Ovary (tissue), 10 donors: ENCODE measurements at regions of chr7 and their contacts with region 1.

Region 1: GRCh38 chr7:106041140-106041717 is 70.9 kb downstream of the SYPL1 start:
- DNase-seq: peak in 3 of 5 donors; percentile 22 to 45 (median 43)
- H3K4me3 ChIP-seq: no peak overlapping the region
- H3K27ac ChIP-seq: no peak overlapping the region
- H3K4me1 ChIP-seq: peaks cover 18% of the 10 kb centered on the region
- H3K27me3 ChIP-seq: no peaks in the 10 kb centered on the region
- CTCF ChIP-seq: peak in 1 of 3 donors; percentile 25
- EP300 ChIP-seq: no peak
- POLR2A ChIP-seq: no peak

Region 2: GRCh38 chr7:105652359-105652993 is 388.8 kb before region 1 on chr7:
- intact Hi-C with region 1: loop called in 3 of 4 experiments (anchors 5 kb)
- DNase-seq: peak; percentile 76 to 88 (median 85)
- H3K4me3 ChIP-seq: no peak overlapping the region
- H3K27ac ChIP-seq: no peak overlapping the region
- H3K4me1 ChIP-seq: peaks cover 17% of the 10 kb centered on the region
- H3K27me3 ChIP-seq: no peaks in the 10 kb centered on the region
- CTCF ChIP-seq: peak; percentile 73 to 91 (median 79)
- EP300 ChIP-seq: no peak
- POLR2A ChIP-seq: peak; percentile 17

Region 3: DNA sequence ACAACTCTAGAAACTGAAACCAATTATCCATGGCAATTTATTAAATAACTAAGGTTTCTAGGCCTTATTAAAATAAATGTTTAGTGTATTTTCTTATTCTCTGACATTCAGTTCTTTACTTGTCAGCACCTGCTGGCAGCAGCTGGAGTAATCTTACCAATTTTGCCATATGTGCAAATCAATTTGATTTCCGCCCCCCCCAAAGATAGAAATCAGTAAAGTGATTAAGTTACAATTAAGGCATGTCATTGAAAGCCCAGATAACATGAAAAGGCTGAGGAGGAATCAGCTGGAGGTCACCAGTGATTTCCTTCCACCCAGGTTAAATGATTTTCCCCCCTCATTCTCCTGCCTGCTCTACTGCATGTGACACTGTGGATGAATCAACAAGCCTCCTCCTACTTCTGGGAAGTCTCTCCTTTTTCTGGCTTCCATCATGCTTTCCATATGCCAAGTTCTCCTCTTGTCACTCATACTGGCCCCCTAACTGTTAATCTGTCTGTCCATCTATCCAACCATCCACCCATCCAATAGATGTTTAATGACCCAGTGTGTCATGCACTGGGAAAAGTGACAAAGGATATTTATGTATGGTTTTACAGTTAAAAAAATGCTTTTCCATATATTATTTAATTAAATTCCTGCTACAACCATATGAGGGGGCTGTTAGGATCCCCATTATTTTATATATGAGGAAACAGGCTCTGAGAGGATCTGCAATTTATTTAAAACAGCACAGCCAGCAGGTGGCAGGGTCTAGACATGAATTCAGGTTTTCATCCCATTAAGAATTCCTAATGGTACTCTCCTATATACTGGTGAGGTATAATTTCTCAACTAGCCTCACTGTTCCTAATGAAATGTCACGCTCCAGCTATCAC is 281.3 kb before region 1 on chr7:
- intact Hi-C with region 1: loop called (anchors 5 to 10 kb)
- DNase-seq: peak; percentile 52 to 73 (median 60)
- H3K4me3 ChIP-seq: no peak overlapping the region
- H3K27ac ChIP-seq: no peak overlapping the region
- H3K4me1 ChIP-seq: peaks cover 4% of the 10 kb centered on the region
- H3K27me3 ChIP-seq: no peaks in the 10 kb centered on the region
- CTCF ChIP-seq: peak; percentile 55 to 77 (median 67)
- EP300 ChIP-seq: no peak
- POLR2A ChIP-seq: no peak

Region 4: GRCh38 chr7:105769901-105770628 is 271.2 kb before region 1 on chr7:
- intact Hi-C with region 1: loop called in 3 of 4 experiments (anchors 5 to 10 kb)
- DNase-seq: no peak
- H3K4me3 ChIP-seq: no peak overlapping the region
- H3K27ac ChIP-seq: no peak overlapping the region
- H3K4me1 ChIP-seq: peaks cover 5% of the 10 kb centered on the region
- H3K27me3 ChIP-seq: no peaks in the 10 kb centered on the region
- CTCF ChIP-seq: no peak
- EP300 ChIP-seq: no peak
- POLR2A ChIP-seq: no peak

Region 5: DNA sequence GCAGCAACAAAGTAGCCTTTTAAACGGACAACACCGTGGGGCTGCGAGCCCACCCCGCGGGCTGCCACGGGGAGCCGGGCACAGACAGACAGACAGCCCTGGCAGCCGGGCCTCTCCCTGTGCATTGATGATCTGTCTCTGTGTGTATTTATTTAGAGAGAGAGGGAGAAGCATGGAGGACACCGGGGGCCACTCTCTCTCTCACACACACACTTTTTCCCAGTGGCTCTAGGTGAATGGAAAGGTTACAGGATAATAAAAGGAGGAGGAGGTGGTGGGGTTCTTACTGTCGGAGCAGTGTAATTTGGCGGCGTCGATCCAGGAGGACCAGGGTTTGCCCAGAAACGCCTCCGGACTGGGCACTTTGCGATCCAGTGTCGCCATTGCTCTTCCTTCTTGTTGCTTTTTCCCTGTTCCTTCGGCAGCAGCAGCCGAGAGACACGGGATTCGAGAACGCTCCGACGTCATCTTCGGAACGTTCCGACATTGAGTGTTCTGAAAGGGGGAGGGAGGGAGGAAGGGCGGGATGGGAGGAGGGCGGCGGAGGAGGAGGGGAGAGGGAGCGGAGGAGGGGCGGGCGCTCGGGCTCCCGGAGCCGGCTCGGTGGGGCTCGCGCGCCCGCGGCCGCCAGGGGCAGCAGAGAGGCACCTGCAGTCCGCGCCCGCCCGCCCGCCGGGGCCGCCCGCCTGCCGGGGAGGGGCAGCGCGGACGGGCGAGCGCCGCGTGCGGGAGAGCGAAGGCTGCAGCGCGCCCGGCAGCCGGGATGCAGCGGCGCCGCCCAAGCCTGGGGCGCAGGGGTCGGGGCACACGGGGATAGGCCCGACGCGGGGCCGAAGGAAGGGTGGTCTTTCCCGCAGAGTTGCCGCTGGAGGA is 164.9 kb before region 1 on chr7 and contains the start of gene ATXN7L1:
- intact Hi-C with region 1: loop called in 1 of 4 experiments (anchors 5 kb)
- DNase-seq: peak; percentile 94 to 96 (median 95)
- H3K4me3 ChIP-seq: peak within 1 kb of the TSS; percentile 88
- H3K27ac ChIP-seq: peak within 1 kb of the TSS; percentile 54 to 63
- H3K4me1 ChIP-seq: peaks cover 8% of the 10 kb centered on the region
- H3K27me3 ChIP-seq: no peaks in the 10 kb centered on the region
- CTCF ChIP-seq: peak in 2 of 3 donors; percentile 60 to 68
- EP300 ChIP-seq: no peak
- POLR2A ChIP-seq: peak; percentile 48
- total RNA-seq, gene ATXN7L1: 5.6 to 17.6 (median 11.4) TPM

Region 6: GRCh38 chr7:105934572-105935185 is 106.5 kb before region 1 on chr7:
- intact Hi-C with region 1: loop called in 2 of 4 experiments (anchors 5 kb)
- DNase-seq: peak; percentile 26 to 58 (median 47)
- H3K4me3 ChIP-seq: no peak overlapping the region
- H3K27ac ChIP-seq: no peak overlapping the region
- H3K4me1 ChIP-seq: no peaks in the 10 kb centered on the region
- H3K27me3 ChIP-seq: no peaks in the 10 kb centered on the region
- CTCF ChIP-seq: peak in 2 of 3 donors; percentile 37
- EP300 ChIP-seq: no peak
- POLR2A ChIP-seq: no peak

Region 7: DNA sequence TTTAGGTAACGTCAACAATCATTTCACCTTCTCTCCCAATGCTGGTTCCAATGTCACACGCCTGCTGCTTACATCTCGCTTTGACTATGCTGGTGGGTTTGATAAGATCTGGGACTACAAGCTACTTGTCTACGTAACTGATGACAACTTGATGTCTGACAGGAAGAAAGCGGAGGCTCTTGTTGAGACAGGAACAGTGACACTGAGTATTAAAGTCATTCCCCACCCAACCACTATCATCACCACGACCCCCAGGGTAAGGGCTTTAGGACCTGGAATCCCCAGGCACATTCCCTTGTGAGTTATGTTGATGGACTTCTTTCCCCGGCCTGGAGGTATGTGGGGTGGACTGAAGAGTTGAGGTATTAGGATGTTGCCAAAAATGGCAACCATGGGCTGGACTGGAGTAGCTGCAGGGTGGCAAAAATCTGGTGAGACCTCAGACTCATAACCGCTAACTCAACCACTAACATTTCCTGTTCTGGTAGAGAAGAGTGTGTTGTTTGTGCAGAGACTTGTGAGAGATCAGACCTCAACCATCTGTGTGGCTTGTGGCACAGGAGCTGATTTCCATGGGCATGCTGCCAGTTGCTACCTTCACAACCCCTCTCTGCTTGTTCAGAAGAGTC is 18.9 kb before region 1 on chr7:
- intact Hi-C with region 1: no loop called
- DNase-seq: no peak
- H3K4me3 ChIP-seq: no peak overlapping the region
- H3K27ac ChIP-seq: no peak overlapping the region
- H3K4me1 ChIP-seq: no peaks in the 10 kb centered on the region
- H3K27me3 ChIP-seq: no peaks in the 10 kb centered on the region
- CTCF ChIP-seq: no peak
- EP300 ChIP-seq: no peak
- POLR2A ChIP-seq: no peak